ENCODE measurements at regions of chr6 and their contacts with region 1.

Region 1: GRCh38 chr6:121482004-121482693 is 46.7 kb downstream of the GJA1 start:
- DNase-seq: no peak
- H3K4me3 ChIP-seq: no peak overlapping the region
- H3K4me3 Mint-ChIP-seq: no peak overlapping the region
- H3K27ac Mint-ChIP-seq: no peak overlapping the region
- H3K4me1 ChIP-seq: peaks cover 10% of the 10 kb centered on the region
- H3K4me1 Mint-ChIP-seq: peaks cover 6% of the 10 kb centered on the region
- H3K27me3 ChIP-seq: no peaks in the 10 kb centered on the region
- H3K27me3 Mint-ChIP-seq: no peaks in the 10 kb centered on the region
- CTCF ChIP-seq: no peak

Region 2: DNA sequence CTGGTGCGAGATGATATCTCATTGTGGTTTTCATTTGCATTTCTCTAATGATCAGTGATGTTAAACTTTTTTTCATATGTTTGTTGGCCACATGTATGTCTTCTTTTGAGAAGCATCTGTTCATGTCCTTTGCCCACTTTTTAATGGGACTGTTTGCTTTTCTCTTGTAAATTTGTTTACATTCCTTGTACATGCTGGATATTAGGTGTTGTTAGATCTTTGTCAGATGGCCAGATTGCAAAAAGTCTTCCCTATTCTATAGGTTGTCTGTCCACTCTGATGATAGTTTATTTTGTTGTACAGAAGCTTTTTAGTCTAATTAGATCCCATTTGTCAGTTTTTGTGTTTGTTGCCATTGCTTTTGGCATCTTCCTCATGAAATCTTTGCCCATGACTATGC is 320.3 kb before region 1 on chr6:
- CTCF ChIA-PET with region 1: no interaction called
- POLR2A ChIA-PET with region 1: no interaction called
- intact Hi-C with region 1: no loop called
- DNase-seq: no peak
- H3K4me3 ChIP-seq: no peak overlapping the region
- H3K4me3 Mint-ChIP-seq: no peak overlapping the region
- H3K27ac Mint-ChIP-seq: no peak overlapping the region
- H3K4me1 ChIP-seq: no peaks in the 10 kb centered on the region
- H3K4me1 Mint-ChIP-seq: no peaks in the 10 kb centered on the region
- H3K27me3 ChIP-seq: no peaks in the 10 kb centered on the region
- H3K27me3 Mint-ChIP-seq: no peaks in the 10 kb centered on the region
- CTCF ChIP-seq: no peak

Region 3: GRCh38 chr6:121436960-121437850 is 44.9 kb before region 1 on chr6:
- CTCF ChIA-PET with region 1: no interaction called
- POLR2A ChIA-PET with region 1: no interaction called
- intact Hi-C with region 1: loop called (anchors 1 kb)
- DNase-seq: peak; percentile 39 to 46
- H3K4me3 ChIP-seq: peak overlapping the region; percentile 56
- H3K4me3 Mint-ChIP-seq: peak overlapping the region; percentile 93
- H3K27ac Mint-ChIP-seq: peak overlapping the region; percentile 92
- H3K4me1 ChIP-seq: 0 out of 2 replicates have a peak, but pooled peaks cover 4% of the 10 kb centered on the region
- H3K4me1 Mint-ChIP-seq: peaks cover 12% of the 10 kb centered on the region
- H3K27me3 ChIP-seq: no peaks in the 10 kb centered on the region
- H3K27me3 Mint-ChIP-seq: no peaks in the 10 kb centered on the region
- CTCF ChIP-seq: no peak

Region 4: DNA sequence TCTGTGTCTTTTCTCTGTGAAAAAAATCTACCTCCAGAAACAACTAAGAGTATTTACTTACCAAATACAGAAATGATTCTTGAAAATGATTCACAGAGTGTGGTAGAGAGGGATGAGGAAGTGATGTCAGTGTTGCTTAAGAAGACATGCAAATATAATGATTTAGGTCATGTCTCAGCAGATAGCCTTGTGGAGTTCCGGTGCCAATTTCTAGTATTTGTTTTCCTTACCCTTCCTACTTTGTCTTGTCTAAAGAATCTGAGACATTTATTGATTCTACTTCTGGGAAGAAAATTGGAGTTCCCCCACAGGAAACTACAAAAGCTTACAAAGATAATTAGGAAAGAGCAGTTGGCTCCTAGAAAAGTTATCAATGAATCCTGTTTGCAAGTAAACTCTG is 22.1 kb after region 1 on chr6:
- CTCF ChIA-PET with region 1: no interaction called
- POLR2A ChIA-PET with region 1: no interaction called
- intact Hi-C with region 1: loop called (anchors 2 kb)
- DNase-seq: peak in 1 of 2 experiments; percentile 8
- H3K4me3 ChIP-seq: no peak overlapping the region
- H3K4me3 Mint-ChIP-seq: no peak overlapping the region
- H3K27ac Mint-ChIP-seq: peak overlapping the region; percentile 76
- H3K4me1 ChIP-seq: peaks cover 8% of the 10 kb centered on the region
- H3K4me1 Mint-ChIP-seq: peaks cover 20% of the 10 kb centered on the region
- H3K27me3 ChIP-seq: no peaks in the 10 kb centered on the region
- H3K27me3 Mint-ChIP-seq: no peaks in the 10 kb centered on the region
- CTCF ChIP-seq: no peak

Region 5: GRCh38 chr6:121573481-121573880 is 91.3 kb after region 1 on chr6:
- CTCF ChIA-PET with region 1: no interaction called
- POLR2A ChIA-PET with region 1: no interaction called
- intact Hi-C with region 1: loop called (anchors 10 kb)
- DNase-seq: no peak
- H3K4me3 ChIP-seq: no peak overlapping the region
- H3K4me3 Mint-ChIP-seq: no peak overlapping the region
- H3K27ac Mint-ChIP-seq: peak overlapping the region; percentile 13
- H3K4me1 ChIP-seq: peaks cover 46% of the 10 kb centered on the region
- H3K4me1 Mint-ChIP-seq: peaks cover 20% of the 10 kb centered on the region
- H3K27me3 ChIP-seq: no peaks in the 10 kb centered on the region
- H3K27me3 Mint-ChIP-seq: no peaks in the 10 kb centered on the region
- CTCF ChIP-seq: no peak

Measured in Caco-2 (cell line).